ENCODE measurements at regions of chr3 and their contacts with region 1.

Region 1: DNA sequence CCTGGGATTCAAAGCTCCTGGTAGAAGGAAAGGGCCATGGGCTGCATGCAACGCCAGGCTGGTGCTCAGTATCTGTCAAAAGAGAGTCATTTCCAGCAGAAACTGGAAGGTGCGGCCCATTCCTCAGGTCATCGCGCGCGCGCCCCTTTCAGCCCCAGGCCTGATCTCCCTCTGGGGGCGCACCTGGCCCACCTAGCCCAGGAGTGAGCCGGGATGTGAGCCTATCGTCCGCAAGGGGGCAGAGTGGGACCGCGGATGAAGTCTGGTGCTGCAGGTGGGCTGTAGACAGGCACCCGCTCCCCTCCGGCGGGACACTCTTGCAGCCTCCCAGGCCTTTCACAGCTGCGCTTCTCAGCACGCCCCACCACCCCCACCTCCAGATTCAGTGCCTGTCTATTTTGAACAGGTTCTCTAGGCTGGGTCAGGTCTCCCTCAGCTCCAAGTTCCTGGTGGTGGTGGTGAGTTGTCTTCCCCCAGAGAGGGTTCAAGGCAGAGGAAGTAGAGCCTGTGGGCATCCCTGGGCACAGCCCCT is 5.8 kb upstream of the RPL29 start:
- DNase-seq: peak; percentile 55 to 91 (median 74)
- ATAC-seq: peak; percentile 79
- H3K4me3 ChIP-seq: no peak overlapping the region
- H3K27ac ChIP-seq: no peak overlapping the region
- H3K4me1 ChIP-seq: peaks cover 13 to 31% of the 10 kb centered on the region in 2 donors
- H3K27me3 ChIP-seq: peaks cover 0 to 7% of the 10 kb centered on the region in 2 donors
- CTCF ChIP-seq: peak; percentile 85 to 88

Region 2: GRCh38 chr3:51830345-51830744 is 171.2 kb before region 1 on chr3:
- intact Hi-C with region 1: no loop called
- DNase-seq: peak in 1 of 4 donors; percentile 63
- ATAC-seq: no peak
- H3K4me3 ChIP-seq: no peak overlapping the region
- H3K27ac ChIP-seq: no peak overlapping the region
- H3K4me1 ChIP-seq: no peaks in the 10 kb centered on the region
- H3K27me3 ChIP-seq: peaks cover 0 to 6% of the 10 kb centered on the region in 2 donors
- CTCF ChIP-seq: no peak

Region 3: DNA sequence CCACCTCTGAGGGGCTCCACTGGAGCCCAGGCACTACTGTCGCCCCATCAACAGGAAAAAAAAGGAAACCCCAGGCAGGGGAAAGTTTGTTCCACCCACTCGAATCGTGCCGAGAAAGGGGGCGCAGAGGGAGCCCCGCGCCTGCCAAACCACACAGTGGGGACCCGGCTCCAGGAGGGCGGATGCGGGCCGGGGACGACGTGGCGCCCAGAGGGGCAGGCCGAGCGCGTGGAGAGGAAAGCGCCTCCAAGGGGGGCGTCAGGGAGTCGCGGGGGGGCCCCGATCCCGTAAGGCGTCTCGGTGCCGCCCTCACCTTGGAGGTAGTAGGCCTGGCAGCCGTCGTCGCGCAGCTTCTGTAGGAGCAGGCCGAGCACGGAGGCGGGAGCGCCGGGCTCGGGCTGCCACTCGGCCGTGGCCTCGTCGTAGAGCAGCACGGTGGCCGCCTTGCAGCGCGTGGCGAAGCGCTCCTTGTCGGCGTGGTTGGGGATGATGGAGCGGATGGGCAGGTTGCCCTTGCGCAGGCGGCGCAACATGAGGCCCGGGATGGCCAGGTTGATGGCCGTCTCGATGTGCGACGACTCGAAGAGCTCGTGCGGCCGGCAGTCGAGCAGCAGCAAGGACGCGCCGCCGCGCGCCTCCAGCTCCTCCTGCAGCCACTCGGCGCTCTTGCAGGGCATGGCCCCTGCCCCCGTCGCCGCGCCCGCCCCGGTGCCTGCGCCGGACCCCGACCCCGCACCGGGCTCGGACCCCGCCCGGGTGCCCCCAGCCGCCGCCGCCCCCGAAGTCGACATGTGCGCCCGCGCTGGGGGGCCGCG is 54.2 kb after region 1 on chr3:
- intact Hi-C with region 1: loop called in 1 of 2 experiments (anchors 2 kb)
- DNase-seq: peak in 3 of 4 donors; percentile 48 to 90 (median 65)
- ATAC-seq: no peak
- H3K4me3 ChIP-seq: peak overlapping the region; percentile 80 to 94
- H3K27ac ChIP-seq: peak overlapping the region; percentile 82 to 85
- H3K4me1 ChIP-seq: peaks cover 39 to 69% of the 10 kb centered on the region in 2 donors
- H3K27me3 ChIP-seq: no peaks in the 10 kb centered on the region
- CTCF ChIP-seq: no peak

Region 4: GRCh38 chr3:52123106-52123725 is 121.7 kb after region 1 on chr3:
- intact Hi-C with region 1: loop called in 1 of 2 experiments (anchors 5 kb)
- DNase-seq: peak; percentile 59 to 93 (median 78)
- ATAC-seq: peak; percentile 95
- H3K4me3 ChIP-seq: no peak overlapping the region
- H3K27ac ChIP-seq: peak overlapping the region in 1 of 2 donors; percentile 76
- H3K4me1 ChIP-seq: peaks cover 16 to 46% of the 10 kb centered on the region in 2 donors
- H3K27me3 ChIP-seq: no peaks in the 10 kb centered on the region
- CTCF ChIP-seq: peak; percentile 94 to 97

Region 5: DNA sequence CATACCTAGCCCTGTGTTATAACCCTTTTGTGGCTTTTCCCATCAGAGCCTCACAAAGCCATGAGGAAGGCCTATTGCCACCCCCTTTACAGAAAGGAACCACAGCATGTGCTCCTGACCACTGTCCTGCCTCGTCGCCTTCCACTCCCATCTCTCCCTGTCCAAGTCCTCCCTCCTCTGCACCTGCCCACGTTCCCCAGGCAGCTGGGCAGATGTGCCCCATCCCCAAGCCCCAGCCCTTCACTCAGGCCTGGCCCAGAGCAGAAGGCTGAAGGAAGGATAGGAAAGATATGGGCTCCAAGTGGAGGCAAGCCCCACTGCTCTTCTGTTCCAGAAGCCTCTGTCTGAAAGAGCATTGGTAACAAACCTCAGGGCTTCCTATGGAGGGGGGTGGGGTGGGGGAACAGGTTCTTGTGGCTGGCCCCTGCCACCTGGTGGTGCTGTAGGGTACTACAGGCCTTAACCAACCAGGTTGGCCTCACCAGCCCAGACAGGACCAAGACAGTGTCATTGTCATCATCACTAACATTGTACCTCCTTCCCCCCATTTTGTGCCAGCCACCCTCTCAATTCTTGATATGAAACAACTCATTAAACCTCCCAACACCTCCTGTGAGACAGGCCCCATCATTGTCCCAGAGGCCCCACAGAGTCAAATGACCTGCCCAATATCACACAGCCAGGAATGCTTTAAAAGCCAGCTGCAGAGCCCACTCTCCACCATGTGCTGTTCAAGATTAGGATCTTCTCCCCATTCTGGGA is 142.7 kb after region 1 on chr3:
- intact Hi-C with region 1: loop called (anchors 5 to 10 kb)
- DNase-seq: peak; percentile 56 to 89 (median 82)
- ATAC-seq: peak; percentile 99
- H3K4me3 ChIP-seq: no peak overlapping the region
- H3K27ac ChIP-seq: no peak overlapping the region
- H3K4me1 ChIP-seq: peaks cover 0 to 6% of the 10 kb centered on the region in 2 donors
- H3K27me3 ChIP-seq: no peaks in the 10 kb centered on the region
- CTCF ChIP-seq: peak; percentile 97 to 98